Activated naive CD4-positive, alpha-beta T cell treated with anti-CD3 and anti-CD28 coated beads for 36 hours (primary cell): ENCODE measurements at regions of chr10 and their contacts with region 1.

Region 1: DNA sequence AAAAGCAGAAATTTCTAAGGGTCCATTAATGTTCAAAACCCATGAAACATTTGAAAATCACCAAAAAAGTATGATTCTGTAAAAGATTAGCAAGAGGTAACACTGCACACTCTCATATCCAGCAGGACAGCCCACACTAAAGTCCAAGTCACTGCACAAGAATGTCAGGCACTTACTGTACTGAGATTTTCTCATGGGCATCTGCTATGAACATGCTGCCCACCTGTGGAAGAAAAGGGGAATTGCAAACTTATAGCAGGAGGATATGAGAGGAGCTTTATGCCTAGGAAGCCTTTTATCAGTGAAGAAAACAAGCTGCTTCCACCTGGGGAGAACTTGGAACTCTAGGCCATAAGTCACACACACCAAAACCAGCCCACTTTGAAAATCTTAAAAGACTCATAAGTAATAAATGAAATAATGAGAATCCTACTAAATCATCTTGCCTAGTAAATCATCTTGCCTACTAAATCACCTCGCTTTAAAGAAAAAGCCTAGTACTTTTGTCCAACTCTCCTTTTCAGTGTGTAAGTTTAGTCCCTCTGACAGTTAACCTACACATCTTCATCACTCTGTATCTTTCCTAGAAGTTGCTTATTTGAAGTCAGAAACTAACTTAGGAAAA is 46.1 kb downstream of the ARMH3 start:
- DNase-seq: peak; percentile 56
- H3K4me3 Mint-ChIP-seq: no peak overlapping the region
- H3K27ac Mint-ChIP-seq: no peak overlapping the region
- H3K4me1 Mint-ChIP-seq: peaks cover 2% of the 10 kb centered on the region
- H3K27me3 Mint-ChIP-seq: no peaks in the 10 kb centered on the region

Region 2: GRCh38 chr10:101830322-101831168 is 179.4 kb before region 1 on chr10:
- CTCF ChIA-PET with region 1: interaction called, 12 read pairs
- intact Hi-C with region 1: no loop called
- DNase-seq: peak; percentile 88
- H3K4me3 Mint-ChIP-seq: peak overlapping the region; percentile 72
- H3K27ac Mint-ChIP-seq: peak overlapping the region; percentile 84
- H3K4me1 Mint-ChIP-seq: peaks cover 48% of the 10 kb centered on the region
- H3K27me3 Mint-ChIP-seq: no peaks in the 10 kb centered on the region

Region 3: GRCh38 chr10:101858723-101859500 is 151.0 kb before region 1 on chr10:
- CTCF ChIA-PET with region 1: interaction called, 10 read pairs
- intact Hi-C with region 1: no loop called
- DNase-seq: no peak
- H3K4me3 Mint-ChIP-seq: no peak overlapping the region
- H3K27ac Mint-ChIP-seq: no peak overlapping the region
- H3K4me1 Mint-ChIP-seq: no peaks in the 10 kb centered on the region
- H3K27me3 Mint-ChIP-seq: no peaks in the 10 kb centered on the region

Region 4: GRCh38 chr10:101889256-101890210 is 120.4 kb before region 1 on chr10:
- CTCF ChIA-PET with region 1: interaction called, 57 read pairs
- intact Hi-C with region 1: loop called (anchors 1 kb)
- DNase-seq: peak; percentile 90
- H3K4me3 Mint-ChIP-seq: no peak overlapping the region
- H3K27ac Mint-ChIP-seq: no peak overlapping the region
- H3K4me1 Mint-ChIP-seq: peaks cover 5% of the 10 kb centered on the region
- H3K27me3 Mint-ChIP-seq: no peaks in the 10 kb centered on the region

Region 5: GRCh38 chr10:101897633-101898032 is 112.3 kb before region 1 on chr10:
- CTCF ChIA-PET with region 1: interaction called, 11 read pairs
- intact Hi-C with region 1: no loop called
- DNase-seq: no peak
- H3K4me3 Mint-ChIP-seq: no peak overlapping the region
- H3K27ac Mint-ChIP-seq: no peak overlapping the region
- H3K4me1 Mint-ChIP-seq: peaks cover 13% of the 10 kb centered on the region
- H3K27me3 Mint-ChIP-seq: no peaks in the 10 kb centered on the region

Region 6: GRCh38 chr10:102269017-102269416 is 259.1 kb after region 1 on chr10:
- CTCF ChIA-PET with region 1: no interaction called
- intact Hi-C with region 1: no loop called
- DNase-seq: no peak
- H3K4me3 Mint-ChIP-seq: no peak overlapping the region
- H3K27ac Mint-ChIP-seq: peak overlapping the region; percentile 87
- H3K4me1 Mint-ChIP-seq: peaks cover 68% of the 10 kb centered on the region
- H3K27me3 Mint-ChIP-seq: no peaks in the 10 kb centered on the region